ENCODE measurements at regions of chr17 and their contacts with region 1.

Region 1: DNA sequence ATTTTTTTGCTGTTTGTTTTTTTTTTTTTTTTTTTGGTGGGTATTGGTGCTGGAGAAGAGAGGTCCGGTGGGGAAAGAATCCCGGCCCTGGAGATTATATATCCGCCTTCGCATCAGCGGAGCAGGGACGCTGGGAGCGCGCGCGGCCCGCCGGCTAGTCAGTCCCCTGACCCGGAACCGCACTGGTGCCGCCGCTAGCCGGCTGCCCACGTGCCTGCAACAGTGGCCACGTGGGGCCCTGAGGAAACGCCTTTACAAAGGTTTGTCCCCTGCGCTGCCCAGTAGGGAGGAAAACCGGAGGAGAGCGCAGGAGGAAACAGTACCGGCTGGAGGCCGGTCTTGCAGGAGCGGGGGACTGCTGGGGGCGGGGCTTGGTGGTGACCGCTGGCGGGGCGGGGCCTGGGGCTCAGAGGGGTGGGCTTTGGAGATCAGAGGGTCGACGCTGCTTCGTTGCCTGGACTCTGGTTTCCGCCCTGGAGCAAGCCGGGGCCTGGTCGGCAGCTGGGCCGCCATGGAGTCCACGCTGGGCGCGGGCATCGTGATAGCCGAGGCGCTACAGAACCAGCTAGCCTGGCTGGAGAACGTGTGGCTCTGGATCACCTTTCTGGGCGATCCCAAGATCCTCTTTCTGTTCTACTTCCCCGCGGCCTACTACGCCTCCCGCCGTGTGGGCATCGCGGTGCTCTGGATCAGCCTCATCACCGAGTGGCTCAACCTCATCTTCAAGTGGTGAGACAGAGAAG is at the start of gene G6PC3:
- DNase-seq: peak; percentile 78
- H3K4me3 Mint-ChIP-seq: peak within 1 kb of the TSS; percentile 98
- H3K27ac Mint-ChIP-seq: peak within 1 kb of the TSS; percentile 99
- H3K4me1 Mint-ChIP-seq: peaks cover 16% of the 10 kb centered on the region
- H3K27me3 Mint-ChIP-seq: no peaks in the 10 kb centered on the region
- total RNA-seq, gene G6PC3: 33.5 and 34.9 TPM in 2 replicates

Region 2: GRCh38 chr17:43871951-43872695 is 198.5 kb before region 1 on chr17:
- intact Hi-C with region 1: no loop called
- DNase-seq: no peak
- H3K4me3 Mint-ChIP-seq: no peak overlapping the region
- H3K27ac Mint-ChIP-seq: no peak overlapping the region
- H3K4me1 Mint-ChIP-seq: no peaks in the 10 kb centered on the region
- H3K27me3 Mint-ChIP-seq: peaks cover 19% of the 10 kb centered on the region

Region 3: DNA sequence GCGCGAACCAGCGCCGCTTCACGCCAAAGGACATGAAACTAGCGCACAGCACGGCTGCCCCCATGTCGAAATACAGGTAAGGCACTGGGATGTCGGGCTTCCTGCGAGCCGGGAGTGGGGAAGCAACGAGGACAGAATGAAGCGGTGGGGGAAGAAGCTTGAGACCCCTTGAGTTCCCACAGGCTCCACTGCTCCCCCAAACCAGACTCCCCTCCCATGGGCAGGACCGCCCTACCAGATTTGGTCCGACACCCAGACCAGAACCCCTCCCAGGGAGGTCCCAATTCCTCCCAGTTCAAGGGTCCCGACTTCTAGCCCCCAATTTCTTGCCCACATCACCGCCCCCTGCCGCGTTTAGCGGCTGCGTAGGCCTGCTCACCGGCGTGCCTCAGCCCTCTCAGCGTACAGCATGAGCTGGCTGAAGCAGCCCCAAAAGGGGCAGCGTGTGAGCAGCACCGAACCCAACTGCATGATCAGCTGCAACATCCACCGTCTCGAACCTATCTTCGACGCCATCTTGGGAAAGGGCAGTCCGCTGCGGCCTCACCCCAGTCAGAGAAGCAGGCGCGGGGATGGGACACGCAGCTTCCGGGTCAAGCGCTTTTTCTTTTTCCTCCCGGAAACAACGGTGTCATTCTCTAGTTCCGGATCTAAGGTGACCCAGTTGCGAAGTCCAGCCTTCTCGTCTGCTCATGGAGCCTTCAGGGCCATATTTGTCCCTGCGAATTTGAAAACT is 56.0 kb before region 1 on chr17 and contains the start of gene TMEM101:
- intact Hi-C with region 1: loop called (anchors 2 kb)
- DNase-seq: peak; percentile 84
- H3K4me3 Mint-ChIP-seq: peak within 1 kb of the TSS; percentile 100
- H3K27ac Mint-ChIP-seq: peak within 1 kb of the TSS; percentile 98
- H3K4me1 Mint-ChIP-seq: peaks cover 16% of the 10 kb centered on the region
- H3K27me3 Mint-ChIP-seq: no peaks in the 10 kb centered on the region
- total RNA-seq, gene TMEM101: 31.6 and 32.8 TPM in 2 replicates

Region 4: GRCh38 chr17:44086364-44087311 is 16.0 kb after region 1 on chr17:
- intact Hi-C with region 1: loop called (anchors 1 kb)
- DNase-seq: no peak
- H3K4me3 Mint-ChIP-seq: no peak overlapping the region
- H3K27ac Mint-ChIP-seq: peak overlapping the region; percentile 67
- H3K4me1 Mint-ChIP-seq: peaks cover 20% of the 10 kb centered on the region
- H3K27me3 Mint-ChIP-seq: no peaks in the 10 kb centered on the region

Region 5: GRCh38 chr17:44110823-44111633 is 40.4 kb after region 1 on chr17:
- intact Hi-C with region 1: no loop called
- DNase-seq: peak; percentile 25
- H3K4me3 Mint-ChIP-seq: no peak overlapping the region
- H3K27ac Mint-ChIP-seq: no peak overlapping the region
- H3K4me1 Mint-ChIP-seq: peaks cover 5% of the 10 kb centered on the region
- H3K27me3 Mint-ChIP-seq: peaks cover 3% of the 10 kb centered on the region